ENCODE measurements at regions of chr7 and their contacts with region 1.

Region 1: GRCh38 chr7:6516387-6516983 is 34.8 kb downstream of the GRID2IP start:
- DNase-seq: peak; percentile 80
- ATAC-seq: peak; percentile 75
- H3K4me3 Mint-ChIP-seq: peak overlapping the region; percentile 71
- H3K27ac Mint-ChIP-seq: peak overlapping the region; percentile 6
- H3K4me1 Mint-ChIP-seq: peaks cover 9% of the 10 kb centered on the region
- H3K27me3 Mint-ChIP-seq: peaks cover 2% of the 10 kb centered on the region

Region 2: DNA sequence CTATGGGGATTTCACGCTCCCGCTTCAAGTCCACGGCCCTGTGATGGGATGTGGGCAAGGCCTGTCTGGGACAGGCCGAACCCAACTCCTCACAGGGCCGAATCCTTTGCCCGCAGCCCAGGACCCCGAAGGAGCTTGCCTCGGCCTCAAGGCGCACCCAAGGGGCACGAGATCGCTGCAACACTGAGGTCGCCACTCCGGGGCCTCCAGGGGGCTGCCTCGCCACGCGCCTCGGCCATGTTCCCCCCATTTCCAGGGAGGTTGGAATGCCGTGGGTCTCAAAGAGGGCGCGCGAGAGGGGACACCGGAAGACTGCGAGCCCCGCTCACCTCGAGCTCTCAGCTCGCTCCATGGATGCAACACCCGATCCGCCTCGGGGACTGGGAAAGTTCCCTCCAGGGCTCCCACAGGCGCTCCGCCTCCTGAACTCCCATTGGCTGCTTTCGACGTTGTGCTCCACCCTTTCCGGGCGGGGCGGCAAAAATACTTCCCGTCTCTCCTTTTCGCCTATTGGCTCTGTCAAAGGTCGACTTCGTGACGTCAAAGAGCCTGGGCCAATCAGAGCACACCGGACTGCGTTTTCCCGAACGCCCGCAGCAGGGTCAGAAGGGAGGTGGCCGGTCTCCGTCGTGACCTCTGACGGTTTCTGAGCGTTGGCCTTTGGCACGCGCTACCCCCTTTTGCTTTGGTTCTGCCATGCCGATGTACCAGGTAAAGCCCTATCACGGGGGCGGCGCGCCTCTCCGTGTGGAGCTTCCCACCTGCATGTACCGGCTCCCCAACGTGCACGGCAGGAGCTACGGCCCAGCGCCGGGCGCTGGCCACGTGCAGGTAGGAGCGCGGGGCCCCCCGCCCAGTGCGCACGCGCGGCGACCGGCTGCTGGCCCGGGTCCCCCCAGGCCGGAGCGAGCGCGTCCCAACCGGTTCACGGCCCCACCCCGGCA is 507.5 kb before region 1 on chr7 and contains the starts of genes AIMP2 and PMS2:
- CTCF ChIA-PET with region 1: no interaction called
- POLR2A ChIA-PET with region 1: no interaction called
- intact Hi-C with region 1: no loop called
- DNase-seq: peak; percentile 98
- ATAC-seq: peak; percentile 90
- H3K4me3 Mint-ChIP-seq: peak within 1 kb of the TSS; percentile 88
- H3K27ac Mint-ChIP-seq: peak within 1 kb of the TSS; percentile 91
- H3K4me1 Mint-ChIP-seq: peaks cover 42% of the 10 kb centered on the region
- H3K27me3 Mint-ChIP-seq: no peaks in the 10 kb centered on the region
- total RNA-seq, gene AIMP2: 50.1 to 56.0 TPM
- total RNA-seq, gene PMS2: 26.9 to 29.0 TPM

Region 3: GRCh38 chr7:6558837-6559236 is 42.4 kb after region 1 on chr7:
- CTCF ChIA-PET with region 1: interaction called, 10 read pairs
- POLR2A ChIA-PET with region 1: interaction called, 4 read pairs
- intact Hi-C with region 1: no loop called
- DNase-seq: peak; percentile 46
- ATAC-seq: peak; percentile 47
- H3K4me3 Mint-ChIP-seq: no peak overlapping the region
- H3K27ac Mint-ChIP-seq: no peak overlapping the region
- H3K4me1 Mint-ChIP-seq: peaks cover 7% of the 10 kb centered on the region
- H3K27me3 Mint-ChIP-seq: no peaks in the 10 kb centered on the region